Mammary epithelial cell (primary cell): ENCODE measurements at regions of chr14 and their contacts with region 1.

Region 1: DNA sequence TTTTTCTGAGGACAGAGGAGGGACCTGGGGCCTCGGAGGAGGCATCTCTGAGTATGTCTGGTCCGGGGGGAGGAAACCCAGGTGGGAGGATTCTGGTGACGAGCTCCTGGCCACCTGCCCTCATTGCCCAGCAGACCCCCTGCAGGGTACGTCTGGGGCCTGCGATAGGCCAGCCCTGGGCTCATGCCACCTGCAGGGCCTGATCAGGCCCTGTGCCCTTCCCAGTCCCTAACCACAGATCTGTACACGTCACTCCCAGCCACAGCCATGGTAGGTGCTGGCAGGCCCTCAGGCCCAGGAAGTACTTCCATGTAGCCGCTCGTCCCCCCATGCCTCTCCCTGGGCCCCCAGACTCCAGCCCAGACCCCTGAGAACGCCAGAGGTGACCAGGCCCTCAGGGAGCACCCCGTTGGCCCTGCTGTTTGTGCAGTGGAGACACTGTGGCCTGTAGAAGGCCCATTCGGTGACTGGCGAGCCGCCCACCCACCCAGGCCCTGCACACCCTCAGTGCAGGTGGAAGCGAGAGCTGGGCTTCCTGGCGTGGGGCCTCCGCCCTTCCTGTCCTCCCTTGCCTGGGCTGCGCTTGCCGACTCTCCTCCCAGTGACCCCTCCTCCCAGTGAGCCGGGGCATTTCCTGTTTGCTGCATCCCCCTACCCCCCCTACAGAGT is 5.7 kb downstream of the INF2 start:
- DNase-seq: peak; percentile 83
- H3K4me3 ChIP-seq: no peak overlapping the region
- H3K27ac ChIP-seq: peak overlapping the region; percentile 50
- H3K4me1 ChIP-seq: peaks cover 82% of the 10 kb centered on the region
- H3K27me3 ChIP-seq: no peaks in the 10 kb centered on the region
- CTCF ChIP-seq: no peak

Region 2: DNA sequence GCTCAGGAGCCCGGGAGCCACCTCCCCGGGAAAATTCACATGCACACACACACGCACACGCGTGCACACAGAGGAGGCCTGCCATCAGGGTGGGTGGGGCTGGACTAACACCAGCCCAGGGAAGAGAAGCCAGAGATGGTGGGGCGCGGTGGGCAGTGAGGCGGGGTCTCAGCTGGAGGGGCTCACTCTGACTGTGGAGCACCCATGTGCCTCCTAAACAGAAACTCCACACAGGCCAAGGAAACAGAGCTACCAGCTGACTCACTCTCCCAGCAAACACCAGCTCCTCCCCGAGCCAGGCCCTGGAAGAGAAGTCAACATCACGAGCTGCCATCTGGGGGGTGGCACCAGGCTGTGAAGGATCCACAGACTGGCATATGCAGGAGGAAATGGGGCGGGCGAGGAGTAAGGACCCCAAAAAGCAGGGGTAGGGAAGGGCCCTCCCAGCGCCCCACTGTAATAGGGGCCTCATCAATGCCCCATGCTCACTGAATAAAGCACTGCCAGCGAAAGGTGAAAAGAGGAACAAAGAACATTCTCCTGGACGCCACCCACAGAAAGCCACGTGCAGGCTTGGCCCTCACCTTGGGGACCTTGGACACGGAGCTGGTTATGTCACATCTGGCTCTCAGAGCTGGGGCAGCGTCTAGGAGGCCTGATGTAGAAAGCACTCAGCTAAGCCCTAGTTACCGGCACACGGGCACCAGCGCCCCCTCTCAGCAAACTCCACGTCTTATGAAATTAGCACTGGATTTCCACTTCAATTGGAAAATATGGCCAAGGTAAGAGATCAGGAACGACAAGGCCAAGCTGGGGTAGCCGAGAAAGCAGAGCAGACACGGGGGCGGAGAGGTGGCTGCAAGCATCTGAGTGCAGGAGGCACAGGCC is 14.1 kb before region 1 on chr14:
- CTCF ChIA-PET with region 1: interaction called, 11 read pairs
- dilution Hi-C with region 1: no loop called
- in situ Hi-C with region 1: no loop called
- intact Hi-C with region 1: no loop called
- DNase-seq: peak; percentile 89
- H3K4me3 ChIP-seq: peak overlapping the region in 2 of 3 experiments; percentile 16 to 22
- H3K27ac ChIP-seq: peak overlapping the region; percentile 93
- H3K4me1 ChIP-seq: peaks cover 56% of the 10 kb centered on the region
- H3K27me3 ChIP-seq: no peaks in the 10 kb centered on the region
- CTCF ChIP-seq: peak; percentile 5 to 41